ENCODE measurements at regions of chr11 and their contacts with region 1.

Region 1: DNA sequence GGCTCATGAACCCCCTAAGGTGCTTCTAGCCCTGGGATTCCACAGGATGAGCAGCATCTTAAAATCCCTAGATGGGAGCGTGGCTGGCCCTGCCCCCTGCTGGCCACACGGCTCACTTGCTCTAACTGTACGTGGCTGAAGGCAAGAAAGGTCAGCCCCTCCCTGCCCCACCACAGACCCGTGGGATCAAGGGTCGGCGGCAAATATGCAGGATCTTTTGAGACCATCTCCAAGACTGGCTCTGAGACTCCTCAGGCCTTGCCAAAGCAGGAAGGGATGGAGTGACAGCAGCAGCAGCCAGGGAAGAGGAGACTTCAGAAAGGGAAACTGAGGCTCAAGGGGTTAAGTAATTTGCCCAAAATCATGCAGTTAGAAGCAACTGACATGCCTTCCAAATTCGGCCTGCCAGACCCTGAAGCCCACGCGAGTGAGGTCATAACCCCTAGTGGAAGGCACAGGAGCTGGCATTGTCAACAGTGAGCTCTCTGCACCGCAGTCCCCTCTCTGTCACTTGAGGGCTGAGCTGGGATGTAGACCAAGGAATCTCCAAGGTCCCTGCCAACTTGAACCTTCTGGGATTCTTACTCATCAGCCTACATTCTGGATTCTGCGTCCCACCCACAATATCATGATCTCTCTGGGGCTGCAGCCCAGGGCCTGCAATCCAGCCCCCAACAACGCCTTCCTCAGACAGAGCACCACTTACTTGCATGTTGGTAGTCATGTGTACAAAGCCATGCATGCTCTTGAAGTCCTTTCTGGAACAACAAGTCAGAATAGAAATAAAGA is 31.4 kb downstream of the CREB3L1 start:
- DNase-seq: peak; percentile 84
- ATAC-seq: peak; percentile 90 to 91

Region 2: GRCh38 chr11:46238967-46239800 is 69.6 kb before region 1 on chr11:
- intact Hi-C with region 1: loop called (anchors 1 to 5 kb)
- DNase-seq: peak; percentile 89
- ATAC-seq: peak; percentile 84 to 86

Region 3: DNA sequence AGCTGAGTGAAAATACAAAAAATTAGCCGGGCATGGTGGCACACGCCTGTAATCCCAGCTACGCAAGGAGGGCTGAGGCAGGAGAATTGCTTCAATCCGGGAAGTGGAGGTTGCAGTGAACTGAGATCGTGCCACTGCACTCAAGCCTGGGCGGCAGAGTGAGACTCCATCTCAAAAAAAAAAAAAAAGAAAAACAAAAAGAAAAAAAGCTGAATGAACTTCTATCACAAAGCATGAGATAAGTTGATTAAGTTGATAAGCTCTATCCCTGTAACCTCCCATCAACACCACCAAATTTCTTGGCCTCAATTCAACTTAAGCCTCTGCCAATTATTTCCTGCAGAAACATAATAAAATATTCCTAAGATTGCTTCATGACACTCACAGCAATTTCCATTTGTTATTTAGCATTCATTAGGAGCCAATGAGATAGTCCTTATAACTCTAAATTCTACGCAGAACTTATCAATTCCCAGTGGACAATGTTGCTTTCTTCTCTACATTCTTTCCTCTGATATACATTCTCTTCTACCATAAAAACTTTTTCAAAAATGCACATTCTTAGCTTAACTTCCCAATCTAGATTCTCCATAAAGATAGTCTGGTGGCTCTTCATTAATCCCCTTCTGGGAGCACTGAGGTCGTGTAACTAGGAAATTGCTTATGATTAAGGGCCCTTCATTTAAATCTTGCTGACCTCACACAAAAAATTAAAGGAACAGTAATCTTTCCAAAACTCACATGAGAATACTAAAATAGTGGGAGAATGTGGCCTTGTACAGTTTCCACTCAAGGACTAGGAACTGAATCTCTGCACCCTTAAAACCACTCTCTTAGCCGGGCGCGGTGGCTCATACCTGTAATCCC is 282.1 kb after region 1 on chr11:
- intact Hi-C with region 1: no loop called
- DNase-seq: no peak
- ATAC-seq: no peak

Region 4: DNA sequence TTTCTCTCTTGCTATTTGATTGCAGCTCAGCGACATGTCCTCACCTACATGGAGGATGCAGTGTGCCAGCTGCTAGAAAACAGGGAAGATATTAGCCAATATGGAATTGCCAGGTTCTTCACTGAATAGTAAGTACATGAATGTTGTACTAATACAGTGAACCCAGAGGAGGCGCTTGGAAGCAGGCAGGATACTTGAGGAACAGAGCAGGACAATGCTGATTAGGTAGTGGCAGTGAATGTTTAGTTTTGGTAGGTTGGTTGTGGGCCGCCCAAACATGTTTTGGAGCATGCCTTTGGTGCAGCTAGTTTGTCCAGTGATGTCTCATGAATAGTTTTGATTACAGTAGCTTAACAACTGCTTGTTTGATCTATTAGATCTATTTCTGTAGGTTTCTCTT is 678.4 kb after region 1 on chr11:
- intact Hi-C with region 1: no loop called
- DNase-seq: no peak
- ATAC-seq: no peak